ENCODE measurements at regions of chr5 and their contacts with region 1.

Region 1: GRCh38 chr5:40904205-40904993 is 4.9 kb upstream of the C7 start:
- DNase-seq: peak; percentile 83
- ATAC-seq: peak; percentile 98
- H3K4me3 ChIP-seq: no peak overlapping the region
- H3K27ac ChIP-seq: no peak overlapping the region
- H3K4me1 ChIP-seq: peaks cover 7% of the 10 kb centered on the region; the same call in 1 of the 2 replicates
- H3K27me3 ChIP-seq: no peaks in the 10 kb centered on the region
- CTCF ChIP-seq: peak; percentile 99
- POLR2A ChIP-seq: peak; percentile 48; the same call in 1 of the 2 replicates
- RAD21 ChIP-seq: peak; percentile 99

Region 2: GRCh38 chr5:40720069-40720468 is 184.3 kb before region 1 on chr5:
- CTCF ChIA-PET with region 1: no interaction called
- POLR2A ChIA-PET with region 1: no interaction called
- dilution Hi-C with region 1: no loop called
- in situ Hi-C with region 1: no loop called
- intact Hi-C with region 1: no loop called
- DNase-seq: no peak
- ATAC-seq: no peak
- H3K4me3 ChIP-seq: no peak overlapping the region
- H3K27ac ChIP-seq: no peak overlapping the region
- H3K4me1 ChIP-seq: 0 out of 2 replicates have a peak, but pooled peaks cover 2% of the 10 kb centered on the region
- H3K27me3 ChIP-seq: no peaks in the 10 kb centered on the region
- CTCF ChIP-seq: no peak
- POLR2A ChIP-seq: no peak
- RAD21 ChIP-seq: no peak

Region 3: DNA sequence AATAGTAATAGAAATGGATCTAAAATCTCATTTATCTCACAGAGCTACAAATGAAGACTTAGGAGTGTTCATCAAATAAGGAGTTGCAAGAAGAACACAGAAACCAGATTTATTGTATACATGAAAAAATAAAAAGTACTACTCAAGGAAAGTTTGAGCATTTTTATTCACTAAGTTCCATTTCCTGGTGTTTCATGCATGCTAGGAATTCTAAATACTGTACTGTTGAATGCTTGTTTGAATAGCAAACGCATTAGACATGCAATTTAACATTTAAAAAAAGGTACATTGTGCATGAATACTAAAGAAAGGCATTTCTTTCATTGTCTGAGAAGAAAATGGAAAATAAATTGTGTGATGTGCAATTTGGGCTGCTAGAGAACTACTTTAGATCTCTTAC is 256.9 kb after region 1 on chr5:
- CTCF ChIA-PET with region 1: interaction called, 10 read pairs
- POLR2A ChIA-PET with region 1: no interaction called
- dilution Hi-C with region 1: no loop called
- in situ Hi-C with region 1: no loop called
- intact Hi-C with region 1: no loop called
- DNase-seq: peak; percentile 77
- ATAC-seq: peak; percentile 89
- H3K4me3 ChIP-seq: no peak overlapping the region
- H3K27ac ChIP-seq: peak overlapping the region; percentile 95
- H3K4me1 ChIP-seq: peaks cover 12% of the 10 kb centered on the region
- H3K27me3 ChIP-seq: no peaks in the 10 kb centered on the region
- CTCF ChIP-seq: no peak
- POLR2A ChIP-seq: no peak
- RAD21 ChIP-seq: no peak

Region 4: DNA sequence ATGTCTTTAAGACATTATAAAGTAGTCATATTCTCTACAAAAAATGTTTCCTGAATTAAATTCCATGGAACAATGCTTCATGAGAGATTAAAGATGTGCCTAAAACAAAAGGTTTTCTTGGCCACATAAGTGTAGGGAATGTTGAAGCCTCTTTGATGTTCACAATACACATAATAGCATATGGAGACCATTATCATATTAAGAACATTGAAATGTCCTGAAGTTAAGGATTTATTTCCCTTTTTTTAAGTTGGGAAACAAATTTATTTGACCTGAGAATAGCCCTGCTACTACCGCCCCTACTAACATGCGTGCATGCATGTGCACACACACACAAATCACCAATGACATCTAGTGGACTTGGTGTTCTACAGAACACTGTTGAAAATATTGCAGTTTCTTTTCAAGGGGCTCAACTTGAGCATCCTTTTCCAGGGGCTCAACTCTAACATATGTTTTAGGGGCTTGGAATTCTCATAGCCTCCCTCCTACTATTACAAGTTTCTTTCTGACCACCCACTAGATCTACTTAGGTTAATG is 433.8 kb after region 1 on chr5:
- CTCF ChIA-PET with region 1: interaction called, 10 read pairs
- POLR2A ChIA-PET with region 1: no interaction called
- dilution Hi-C with region 1: no loop called
- in situ Hi-C with region 1: loop called (anchors 10 kb)
- intact Hi-C with region 1: loop called (anchors 2 kb)
- DNase-seq: peak; percentile 10
- ATAC-seq: no peak
- H3K4me3 ChIP-seq: no peak overlapping the region
- H3K27ac ChIP-seq: no peak overlapping the region
- H3K4me1 ChIP-seq: peaks cover 2% of the 10 kb centered on the region; the same call in 1 of the 2 replicates
- H3K27me3 ChIP-seq: no peaks in the 10 kb centered on the region
- CTCF ChIP-seq: 0 out of 2 replicates have a peak, but pooled peaks have one; percentile 15
- POLR2A ChIP-seq: no peak
- RAD21 ChIP-seq: peak; percentile 27; the same call in 1 of the 2 replicates

Region 5: DNA sequence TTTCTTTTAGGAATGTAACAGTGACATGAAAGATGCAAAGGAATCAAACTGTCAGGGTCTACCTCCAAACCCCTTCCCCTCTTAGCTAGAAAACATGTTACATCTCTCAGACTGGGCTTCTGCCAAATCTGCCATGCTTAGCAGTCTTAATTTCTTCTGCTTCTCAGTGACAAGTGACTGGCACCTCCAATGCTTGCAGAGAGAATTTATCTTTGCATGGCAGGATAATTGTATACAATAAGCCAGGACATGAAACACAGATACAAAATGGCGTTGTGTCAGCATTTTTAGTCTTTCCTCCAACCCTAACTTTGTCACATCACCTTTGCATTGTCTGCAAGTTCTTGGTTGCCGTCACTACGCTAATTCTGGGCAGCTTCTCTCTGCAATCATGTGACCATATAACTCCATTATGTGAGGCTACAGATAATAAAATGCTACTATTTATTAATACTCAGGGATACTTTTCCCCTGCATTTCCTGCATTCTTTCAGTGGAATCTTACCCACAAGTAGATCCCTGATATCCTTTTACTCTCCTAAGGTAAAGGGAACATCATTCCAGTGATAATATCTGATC is 516.2 kb after region 1 on chr5:
- CTCF ChIA-PET with region 1: no interaction called
- POLR2A ChIA-PET with region 1: no interaction called
- dilution Hi-C with region 1: no loop called
- in situ Hi-C with region 1: no loop called
- intact Hi-C with region 1: loop called (anchors 10 kb)
- DNase-seq: no peak
- ATAC-seq: no peak
- H3K4me3 ChIP-seq: no peak overlapping the region
- H3K27ac ChIP-seq: no peak overlapping the region
- H3K4me1 ChIP-seq: peaks cover 2% of the 10 kb centered on the region
- H3K27me3 ChIP-seq: no peaks in the 10 kb centered on the region
- CTCF ChIP-seq: no peak
- POLR2A ChIP-seq: no peak
- RAD21 ChIP-seq: no peak

Region 6: GRCh38 chr5:41636605-41637004 is 732.2 kb after region 1 on chr5:
- CTCF ChIA-PET with region 1: interaction called, 15 read pairs
- POLR2A ChIA-PET with region 1: no interaction called
- dilution Hi-C with region 1: no loop called
- in situ Hi-C with region 1: loop called (anchors 25 kb)
- intact Hi-C with region 1: loop called (anchors 1 kb)
- DNase-seq: peak; percentile 28
- ATAC-seq: peak; percentile 66; the same call in 1 of the 2 replicates
- H3K4me3 ChIP-seq: no peak overlapping the region
- H3K27ac ChIP-seq: no peak overlapping the region
- H3K4me1 ChIP-seq: no peaks in the 10 kb centered on the region
- H3K27me3 ChIP-seq: no peaks in the 10 kb centered on the region
- CTCF ChIP-seq: peak; percentile 28
- POLR2A ChIP-seq: no peak
- RAD21 ChIP-seq: no peak

Region 7: GRCh38 chr5:41707853-41708603 is 803.6 kb after region 1 on chr5:
- CTCF ChIA-PET with region 1: interaction called, 4 read pairs
- POLR2A ChIA-PET with region 1: no interaction called
- dilution Hi-C with region 1: no loop called
- in situ Hi-C with region 1: no loop called
- intact Hi-C with region 1: loop called (anchors 2 kb)
- DNase-seq: peak; percentile 76
- ATAC-seq: peak; percentile 99
- H3K4me3 ChIP-seq: no peak overlapping the region
- H3K27ac ChIP-seq: peak overlapping the region; percentile 72; the same call in 1 of the 2 replicates
- H3K4me1 ChIP-seq: peaks cover 5% of the 10 kb centered on the region
- H3K27me3 ChIP-seq: no peaks in the 10 kb centered on the region
- CTCF ChIP-seq: peak; percentile 89
- POLR2A ChIP-seq: no peak
- RAD21 ChIP-seq: peak; percentile 87

Region 8: GRCh38 chr5:41843456-41844370 is 939.3 kb after region 1 on chr5:
- CTCF ChIA-PET with region 1: no interaction called
- POLR2A ChIA-PET with region 1: no interaction called
- dilution Hi-C with region 1: no loop called
- in situ Hi-C with region 1: loop called (anchors 10 kb)
- intact Hi-C with region 1: loop called (anchors 1 kb)
- DNase-seq: peak; percentile 75
- ATAC-seq: peak; percentile 92
- H3K4me3 ChIP-seq: no peak overlapping the region
- H3K27ac ChIP-seq: no peak overlapping the region
- H3K4me1 ChIP-seq: no peaks in the 10 kb centered on the region
- H3K27me3 ChIP-seq: no peaks in the 10 kb centered on the region
- CTCF ChIP-seq: peak; percentile 95
- POLR2A ChIP-seq: 0 out of 2 replicates have a peak, but pooled peaks have one; percentile 35
- RAD21 ChIP-seq: peak; percentile 96

Measured in IMR-90 (cell line).